ENCODE measurements at regions of chr3 and their contacts with region 1.

Region 1: GRCh38 chr3:196432137-196432879 is at the start of gene UBXN7:
- DNase-seq: peak; percentile 88 to 95 (median 92)
- H3K4me3 ChIP-seq: peak within 1 kb of the TSS; percentile 75 to 100 (median 97)
- H3K27ac ChIP-seq: peak within 1 kb of the TSS; percentile 65 to 99 (median 96)
- H3K27me3 ChIP-seq: no peaks in the 10 kb centered on the region
- CTCF ChIP-seq: peak in 23 of 56 donors; percentile 5 to 46 (median 21)
- total RNA-seq, gene UBXN7: 60.6 to 105 (median 78.4) TPM

Region 2: GRCh38 chr3:196317687-196318467 is 114.4 kb before region 1 on chr3 and contains the start of gene DYNLT2B:
- intact Hi-C with region 1: loop called (anchors 2 to 5 kb)
- DNase-seq: peak; percentile 74 to 93 (median 85)
- H3K4me3 ChIP-seq: peak within 1 kb of the TSS; percentile 65 to 94 (median 86)
- H3K27ac ChIP-seq: peak within 1 kb of the TSS; percentile 20 to 96 (median 88)
- H3K27me3 ChIP-seq: no peaks in the 10 kb centered on the region
- CTCF ChIP-seq: peak in 35 of 56 donors; percentile 9 to 52 (median 24)
- total RNA-seq, gene DYNLT2B: 11.4 to 43.8 (median 25.6) TPM

Region 3: GRCh38 chr3:196547067-196547466 is 114.8 kb after region 1 on chr3:
- intact Hi-C with region 1: no loop called
- DNase-seq: no peak
- H3K4me3 ChIP-seq: no peak overlapping the region
- H3K27ac ChIP-seq: no peak overlapping the region
- H3K27me3 ChIP-seq: no peaks in the 10 kb centered on the region
- CTCF ChIP-seq: no peak

Region 4: GRCh38 chr3:196568246-196569002 is 136.1 kb after region 1 on chr3 and contains the starts of genes FBXO45 and WDR53:
- intact Hi-C with region 1: loop called in 1 of 2 experiments (anchors 2 kb)
- DNase-seq: peak; percentile 85 to 96 (median 93)
- H3K4me3 ChIP-seq: peak within 1 kb of the TSS; percentile 63 to 100 (median 94)
- H3K27ac ChIP-seq: peak within 1 kb of the TSS in 56 of 59 donors; percentile 10 to 91 (median 77)
- H3K27me3 ChIP-seq: no peaks in the 10 kb centered on the region
- CTCF ChIP-seq: peak in 43 of 56 donors; percentile 7 to 65 (median 38)
- total RNA-seq, gene FBXO45: 12.3 to 28.8 (median 20.8) TPM
- total RNA-seq, gene WDR53: 6.0 to 19.1 (median 12.3) TPM

Region 5: DNA sequence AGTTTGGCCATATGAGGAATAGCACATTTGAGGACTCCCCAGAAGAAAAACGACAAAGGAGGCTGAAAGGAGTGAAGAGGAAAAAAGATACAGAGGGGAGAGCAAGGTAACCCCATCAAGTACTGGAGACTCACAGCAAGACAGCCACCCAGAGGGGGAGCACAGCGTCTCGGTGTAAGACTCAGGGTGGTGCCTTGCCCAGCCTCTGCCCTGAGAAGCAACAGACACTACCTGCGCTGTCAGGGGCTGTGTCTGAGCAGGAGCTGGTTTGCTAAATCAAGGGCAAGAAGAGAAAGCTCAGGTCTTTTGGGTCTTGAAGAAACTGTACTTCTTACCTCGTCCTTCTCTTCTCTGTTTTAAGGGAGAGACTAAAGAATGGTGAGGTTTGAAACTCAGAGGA is 164.0 kb after region 1 on chr3:
- intact Hi-C with region 1: no loop called
- DNase-seq: no peak
- H3K4me3 ChIP-seq: no peak overlapping the region
- H3K27ac ChIP-seq: no peak overlapping the region
- H3K27me3 ChIP-seq: no peaks in the 10 kb centered on the region
- CTCF ChIP-seq: no peak

Region 6: GRCh38 chr3:196889844-196890708 is 457.8 kb after region 1 on chr3:
- intact Hi-C with region 1: no loop called
- DNase-seq: no peak
- H3K4me3 ChIP-seq: no peak overlapping the region
- H3K27ac ChIP-seq: no peak overlapping the region
- H3K27me3 ChIP-seq: no peaks in the 10 kb centered on the region
- CTCF ChIP-seq: no peak